CD14-positive monocyte (primary cell): ENCODE measurements at regions of chr1 and their contacts with region 1.

Region 1: GRCh38 chr1:116556289-116557006 is 14.4 kb downstream of the CD58 start:
- DNase-seq: peak; percentile 89 to 96 (median 91)
- H3K4me3 ChIP-seq: peak overlapping the region in 1 of 3 experiments; percentile 6
- H3K4me3 Mint-ChIP-seq: peak overlapping the region; percentile 24 to 53
- H3K27ac ChIP-seq: peak overlapping the region; percentile 9 to 94
- H3K27ac Mint-ChIP-seq: peak overlapping the region; percentile 94 to 99 (median 97)
- H3K4me1 ChIP-seq: peaks cover 65 to 75% of the 10 kb centered on the region in 2 donors
- H3K4me1 Mint-ChIP-seq: peaks cover 78% of the 10 kb centered on the region
- H3K27me3 ChIP-seq: no peaks in the 10 kb centered on the region
- H3K27me3 Mint-ChIP-seq: no peaks in the 10 kb centered on the region
- CTCF ChIP-seq: no peak

Region 2: DNA sequence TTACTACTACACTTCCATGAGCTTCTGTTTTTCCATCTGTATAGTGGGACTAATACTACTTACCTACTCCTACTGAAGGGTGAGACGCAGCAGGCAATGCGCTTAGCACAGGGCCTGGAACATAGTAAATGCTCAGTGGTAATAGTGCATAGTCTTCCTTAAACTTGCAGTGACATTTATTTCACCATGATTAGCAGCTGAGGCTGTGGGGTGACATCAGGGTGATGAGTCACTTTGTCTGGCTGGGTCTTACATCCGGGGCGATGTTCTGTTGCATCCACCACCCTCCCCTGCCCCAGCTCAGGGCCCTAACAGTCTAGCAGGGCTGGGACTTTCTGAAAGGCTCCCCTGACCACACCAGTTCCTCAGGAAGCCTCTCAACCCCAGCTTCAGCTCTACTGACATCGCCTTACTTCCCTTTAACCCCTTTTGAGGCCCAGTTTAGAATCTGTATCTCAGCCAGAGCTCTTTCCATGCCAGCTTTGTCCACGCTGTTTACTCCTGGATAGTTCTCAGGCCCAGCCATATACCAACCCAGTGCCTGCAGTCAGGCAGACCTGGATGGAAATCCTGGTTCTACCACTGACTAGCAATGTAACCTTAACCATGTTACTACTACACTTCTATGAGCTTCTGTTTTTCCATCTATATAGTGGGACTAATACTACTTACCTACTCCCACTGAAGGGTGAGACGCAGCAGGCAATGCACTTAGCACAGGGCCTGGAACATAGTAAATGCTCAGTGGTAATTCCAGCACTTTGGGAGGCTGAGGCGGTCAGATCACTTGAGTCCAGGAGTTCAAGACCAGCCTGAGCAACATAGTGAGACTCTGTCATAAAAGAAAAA is 51.9 kb before region 1 on chr1:
- intact Hi-C with region 1: loop called in 1 of 2 experiments (anchors 5 kb)
- DNase-seq: peak; percentile 99 to 100 (median 99)
- H3K4me3 ChIP-seq: peak overlapping the region in 1 of 3 experiments; percentile 21
- H3K4me3 Mint-ChIP-seq: no peak overlapping the region
- H3K27ac ChIP-seq: peak overlapping the region; percentile 95 to 100
- H3K27ac Mint-ChIP-seq: peak overlapping the region; percentile 98 to 100 (median 99)
- H3K4me1 ChIP-seq: peaks cover 68 to 72% of the 10 kb centered on the region in 2 donors
- H3K4me1 Mint-ChIP-seq: peaks cover 68% of the 10 kb centered on the region
- H3K27me3 ChIP-seq: no peaks in the 10 kb centered on the region
- H3K27me3 Mint-ChIP-seq: peaks cover 0 to 4% (median 1%) of the 10 kb centered on the region in 3 donors
- CTCF ChIP-seq: no peak